ENCODE measurements at regions of chr7 and their contacts with region 1.

Region 1: GRCh38 chr7:78794101-78794500 is 659.4 kb downstream of the MAGI2 start:
- DNase-seq: no peak
- ATAC-seq: no peak
- H3K4me3 ChIP-seq: no peak overlapping the region
- H3K27ac ChIP-seq: no peak overlapping the region
- H3K4me1 ChIP-seq: no peaks in the 10 kb centered on the region
- H3K27me3 ChIP-seq: no peaks in the 10 kb centered on the region
- CTCF ChIP-seq: no peak
- EP300 ChIP-seq: no peak
- POLR2A ChIP-seq: no peak
- RAD21 ChIP-seq: no peak

Region 2: DNA sequence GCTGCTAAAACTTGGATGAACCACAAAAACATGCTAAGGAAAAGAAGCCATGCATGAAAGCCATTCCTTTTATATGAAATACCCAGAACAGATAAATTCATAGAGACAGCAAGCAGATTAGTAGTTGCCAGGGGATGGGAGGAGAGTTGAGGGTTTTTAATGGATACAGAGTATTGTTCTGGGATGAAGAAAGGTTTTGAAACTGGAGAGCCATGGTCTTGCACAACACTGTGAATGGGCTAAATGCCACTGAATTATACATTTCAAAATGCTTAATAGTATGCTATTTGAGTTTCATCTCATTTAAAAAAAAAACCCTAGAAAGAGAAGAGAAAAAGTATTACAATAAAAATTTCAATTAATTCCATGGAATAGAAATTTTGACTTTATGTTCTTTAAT is 1563.4 kb after region 1 on chr7:
- CTCF ChIA-PET with region 1: no interaction called
- POLR2A ChIA-PET with region 1: no interaction called
- in situ Hi-C with region 1: no loop called
- intact Hi-C with region 1: loop called (anchors 5 kb)
- DNase-seq: no peak
- ATAC-seq: no peak
- H3K4me3 ChIP-seq: no peak overlapping the region
- H3K27ac ChIP-seq: no peak overlapping the region
- H3K4me1 ChIP-seq: no peaks in the 10 kb centered on the region
- H3K27me3 ChIP-seq: no peaks in the 10 kb centered on the region
- CTCF ChIP-seq: no peak
- EP300 ChIP-seq: no peak
- POLR2A ChIP-seq: no peak
- RAD21 ChIP-seq: no peak

Measured in HepG2 (cell line).